ENCODE measurements at regions of chr18 and their contacts with region 1.

Region 1: GRCh38 chr18:12934454-12935071 is 13.2 kb upstream of the SEH1L start:
- DNase-seq: peak; percentile 82
- H3K4me3 Mint-ChIP-seq: no peak overlapping the region
- H3K27ac Mint-ChIP-seq: no peak overlapping the region
- H3K4me1 Mint-ChIP-seq: peaks cover 2% of the 10 kb centered on the region
- H3K27me3 Mint-ChIP-seq: no peaks in the 10 kb centered on the region

Region 2: GRCh38 chr18:12721495-12722275 is 212.9 kb before region 1 on chr18:
- CTCF ChIA-PET with region 1: interaction called, 15 read pairs
- POLR2A ChIA-PET with region 1: no interaction called
- DNase-seq: no peak
- H3K4me3 Mint-ChIP-seq: no peak overlapping the region
- H3K27ac Mint-ChIP-seq: peak overlapping the region; percentile 82
- H3K4me1 Mint-ChIP-seq: peaks cover 21% of the 10 kb centered on the region
- H3K27me3 Mint-ChIP-seq: no peaks in the 10 kb centered on the region

Region 3: GRCh38 chr18:12726774-12727550 is 207.6 kb before region 1 on chr18:
- CTCF ChIA-PET with region 1: interaction called, 15 read pairs
- POLR2A ChIA-PET with region 1: no interaction called
- DNase-seq: peak; percentile 76
- H3K4me3 Mint-ChIP-seq: no peak overlapping the region
- H3K27ac Mint-ChIP-seq: no peak overlapping the region
- H3K4me1 Mint-ChIP-seq: peaks cover 4% of the 10 kb centered on the region
- H3K27me3 Mint-ChIP-seq: no peaks in the 10 kb centered on the region

Region 4: GRCh38 chr18:12921178-12921577 is 13.4 kb before region 1 on chr18:
- CTCF ChIA-PET with region 1: interaction called, 11 read pairs
- POLR2A ChIA-PET with region 1: no interaction called
- DNase-seq: peak; percentile 34
- H3K4me3 Mint-ChIP-seq: no peak overlapping the region
- H3K27ac Mint-ChIP-seq: peak overlapping the region; percentile 66
- H3K4me1 Mint-ChIP-seq: peaks cover 17% of the 10 kb centered on the region
- H3K27me3 Mint-ChIP-seq: peaks cover 9% of the 10 kb centered on the region

Region 5: DNA sequence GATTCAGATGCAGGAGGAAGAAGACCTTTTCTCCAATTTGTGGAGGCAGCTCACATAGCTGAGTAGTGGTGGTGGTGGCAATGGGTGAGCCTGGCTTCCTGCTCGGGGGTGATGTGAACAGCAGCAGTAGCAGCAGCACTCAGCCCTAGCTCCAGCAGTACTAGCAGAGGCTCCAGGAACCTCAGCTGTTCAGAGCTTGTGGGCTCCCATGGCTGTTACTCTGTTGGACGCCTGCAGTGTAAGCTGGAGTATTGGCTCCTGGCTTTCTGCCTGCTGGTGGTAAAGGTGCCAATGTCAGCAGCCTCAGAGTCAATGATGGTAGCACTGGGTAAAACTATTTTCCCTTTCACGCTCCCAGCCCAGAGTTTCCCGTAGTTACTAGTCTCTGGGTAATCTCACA is 10.1 kb after region 1 on chr18:
- CTCF ChIA-PET with region 1: interaction called, 17 read pairs
- POLR2A ChIA-PET with region 1: no interaction called
- DNase-seq: peak; percentile 13
- H3K4me3 Mint-ChIP-seq: no peak overlapping the region
- H3K27ac Mint-ChIP-seq: no peak overlapping the region
- H3K4me1 Mint-ChIP-seq: peaks cover 32% of the 10 kb centered on the region
- H3K27me3 Mint-ChIP-seq: peaks cover 1% of the 10 kb centered on the region

Region 6: DNA sequence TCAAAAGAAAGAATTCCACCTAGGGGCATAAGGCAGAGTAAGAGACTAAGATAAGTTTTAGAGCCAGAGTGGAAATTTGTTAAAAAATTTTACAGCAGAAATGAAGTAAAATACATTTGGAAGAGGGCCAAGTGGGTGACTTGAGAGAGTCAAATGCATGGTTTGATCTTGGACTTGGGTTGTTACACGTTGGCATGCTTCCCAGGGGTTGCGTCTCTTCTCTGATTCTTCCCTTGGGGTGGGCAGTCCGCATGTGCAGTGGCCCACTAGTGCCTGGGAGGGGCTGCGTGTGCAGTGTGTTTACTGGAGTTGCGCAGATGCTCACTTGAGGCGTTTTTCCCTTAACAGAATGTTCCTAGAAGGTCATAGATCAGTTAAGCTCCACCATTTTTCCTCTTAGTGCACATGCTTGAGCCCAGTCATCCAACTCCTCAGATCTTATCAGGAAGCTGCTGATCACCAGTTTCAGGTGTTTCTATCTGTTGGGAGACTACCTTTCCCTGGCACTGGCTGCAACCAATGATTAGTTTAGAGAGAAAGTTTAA is 26.4 kb after region 1 on chr18:
- CTCF ChIA-PET with region 1: no interaction called
- POLR2A ChIA-PET with region 1: no interaction called
- DNase-seq: no peak
- H3K4me3 Mint-ChIP-seq: no peak overlapping the region
- H3K27ac Mint-ChIP-seq: no peak overlapping the region
- H3K4me1 Mint-ChIP-seq: peaks cover 2% of the 10 kb centered on the region
- H3K27me3 Mint-ChIP-seq: no peaks in the 10 kb centered on the region

Measured in activated CD4-positive, alpha-beta T cell treated with anti-CD3 and anti-CD28 coated beads, Interleukin-2, amount 10 ng/mL, durations not matched to agents 7 days and 5 days (primary cell).